Endothelial cell of umbilical vein (primary cell): ENCODE measurements at regions of chr1 and their contacts with region 1.

Region 1: DNA sequence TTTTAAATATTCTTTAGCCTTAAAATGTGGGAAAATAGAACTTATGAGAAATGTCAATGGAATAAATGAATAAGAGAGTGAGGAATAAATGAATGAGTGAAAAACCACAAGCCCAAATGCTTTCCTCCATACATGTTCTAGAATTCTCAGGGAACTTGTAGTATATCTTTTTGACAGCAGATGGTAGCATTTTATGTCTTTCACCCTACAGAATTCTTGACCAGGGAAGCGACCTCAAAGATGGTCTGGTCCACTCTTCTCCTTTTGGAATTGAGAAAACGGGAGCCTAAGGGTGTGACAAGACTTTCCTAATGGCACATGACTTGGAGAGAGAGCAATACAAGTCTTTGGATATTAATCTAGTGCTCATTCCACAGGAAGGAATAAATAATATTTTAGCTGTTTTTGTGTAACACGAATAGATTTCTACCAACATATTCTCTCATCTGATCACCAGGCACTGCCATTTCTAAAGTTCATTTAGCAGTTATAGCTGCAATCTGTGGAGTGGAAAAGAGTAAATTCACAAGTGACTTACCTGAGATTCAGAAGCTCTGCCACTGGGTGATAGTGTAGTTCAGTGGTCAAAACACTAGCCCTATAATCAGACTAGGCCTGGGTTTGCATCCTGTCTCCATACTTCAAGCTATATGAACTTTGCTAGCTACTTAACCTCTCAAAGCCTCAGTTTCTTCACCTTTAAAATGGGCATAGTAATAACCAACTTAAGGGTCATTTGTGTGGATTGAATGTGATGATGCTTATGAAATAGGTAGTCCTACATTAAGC is 15.0 kb upstream of the F5 start:
- DNase-seq: peak; percentile 66
- H3K4me3 ChIP-seq: no peak overlapping the region
- H3K27ac ChIP-seq: no peak overlapping the region
- H3K4me1 ChIP-seq: no peaks in the 10 kb centered on the region
- H3K27me3 ChIP-seq: peaks cover 0 to 6% of the 10 kb centered on the region in 2 experiments
- CTCF ChIP-seq: peak; percentile 20 to 31
- POLR2A ChIP-seq: no peak

Region 2: DNA sequence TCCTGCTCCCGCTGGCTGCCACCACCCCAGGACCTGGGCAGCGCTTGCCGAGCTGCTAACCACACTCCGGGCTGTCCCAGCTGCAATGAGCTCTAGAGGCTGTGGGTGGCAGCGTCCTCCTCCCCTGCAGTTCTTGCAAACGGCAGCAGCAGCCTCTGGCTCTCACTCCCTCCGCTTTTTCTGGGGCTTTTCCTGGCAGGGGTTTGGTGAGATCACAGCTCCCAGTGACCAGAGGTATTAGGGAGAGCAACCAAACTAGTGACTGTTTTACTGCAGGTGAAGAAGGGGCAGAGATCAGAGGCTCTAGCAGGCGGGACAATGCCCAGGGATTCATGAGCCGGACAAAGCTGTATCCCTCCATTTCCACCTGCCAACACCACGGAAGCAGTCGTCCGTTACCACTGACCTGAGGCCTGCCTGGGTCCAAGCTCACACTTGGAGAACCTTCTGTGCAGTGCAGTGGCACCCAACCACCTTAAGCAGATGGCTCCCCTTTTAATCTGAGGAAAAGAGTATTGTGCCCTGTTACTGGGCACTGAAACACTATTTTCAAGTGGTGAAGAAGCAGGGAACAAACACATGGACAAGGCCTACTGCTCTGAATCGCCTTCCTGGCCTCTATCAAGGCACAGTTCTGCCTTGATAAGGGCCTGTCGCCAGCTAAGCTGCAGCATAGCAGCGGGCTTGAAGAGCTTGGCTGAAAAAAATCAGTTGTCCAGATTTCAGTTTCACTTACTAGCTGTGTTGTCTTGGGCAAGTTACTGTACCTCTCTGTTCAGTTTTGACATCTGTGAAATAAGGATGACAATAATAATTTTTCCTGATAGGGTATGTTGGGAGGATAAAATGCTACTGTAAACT is 14.7 kb before region 1 on chr1 and contains the start of gene F5:
- CTCF ChIA-PET with region 1: interaction called, 24 read pairs
- POLR2A ChIA-PET with region 1: no interaction called
- dilution Hi-C with region 1: no loop called
- intact Hi-C with region 1: no loop called
- DNase-seq: peak; percentile 61
- H3K4me3 ChIP-seq: no peak within 1 kb of the TSS
- H3K27ac ChIP-seq: no peak within 1 kb of the TSS
- H3K4me1 ChIP-seq: no peaks in the 10 kb centered on the region
- H3K27me3 ChIP-seq: peaks cover 0 to 4% of the 10 kb centered on the region in 2 experiments
- CTCF ChIP-seq: peak; percentile 43 to 79
- POLR2A ChIP-seq: no peak
- total RNA-seq, gene F5: not detected in 2 replicates

Region 3: GRCh38 chr1:169680377-169681019 is 79.2 kb after region 1 on chr1:
- CTCF ChIA-PET with region 1: interaction called, 8 read pairs
- POLR2A ChIA-PET with region 1: no interaction called
- dilution Hi-C with region 1: no loop called
- intact Hi-C with region 1: loop called (anchors 1 kb)
- DNase-seq: no peak
- H3K4me3 ChIP-seq: no peak overlapping the region
- H3K27ac ChIP-seq: no peak overlapping the region
- H3K4me1 ChIP-seq: peaks cover 12% of the 10 kb centered on the region
- H3K27me3 ChIP-seq: no peaks in the 10 kb centered on the region
- CTCF ChIP-seq: no peak
- POLR2A ChIP-seq: no peak

Region 4: DNA sequence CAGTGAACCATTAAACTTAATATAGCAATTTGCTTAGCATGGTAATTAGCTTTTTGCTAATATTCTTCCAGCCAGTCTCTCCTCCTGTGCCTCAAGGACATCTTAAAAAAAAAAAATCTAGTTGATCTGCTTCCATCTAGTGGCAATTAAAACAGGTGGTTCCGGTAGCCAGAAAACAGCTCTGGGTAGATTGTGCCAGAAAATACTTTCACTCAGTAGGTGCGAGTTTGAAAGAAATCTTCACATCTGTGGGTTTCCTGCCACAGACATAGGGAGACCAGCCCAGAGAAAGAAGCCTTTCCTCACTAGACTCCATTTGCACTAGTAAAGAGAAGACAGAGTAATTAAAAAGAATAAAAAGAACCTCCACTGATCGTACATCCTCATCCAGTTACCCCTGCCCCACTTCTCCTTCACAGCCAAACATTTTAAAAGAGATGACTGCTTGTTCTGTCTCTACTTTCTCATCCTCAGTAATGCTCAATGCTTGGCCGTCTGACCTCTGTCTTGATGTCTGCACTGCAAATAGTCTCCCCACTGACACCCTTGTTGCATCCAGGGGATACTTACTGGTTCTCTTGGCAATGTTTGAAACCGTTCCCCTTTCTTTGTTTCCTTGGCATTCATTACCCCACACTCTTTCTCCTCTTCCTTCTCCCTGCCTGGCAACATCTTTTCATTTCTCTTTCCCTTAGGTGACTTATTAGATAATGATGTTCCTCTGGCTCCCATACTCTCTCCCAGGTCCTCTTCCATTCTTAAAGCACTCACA is 93.2 kb after region 1 on chr1:
- CTCF ChIA-PET with region 1: interaction called, 25 read pairs
- POLR2A ChIA-PET with region 1: no interaction called
- dilution Hi-C with region 1: no loop called
- intact Hi-C with region 1: no loop called
- DNase-seq: peak; percentile 16
- H3K4me3 ChIP-seq: no peak overlapping the region
- H3K27ac ChIP-seq: no peak overlapping the region
- H3K4me1 ChIP-seq: peaks cover 5% of the 10 kb centered on the region
- H3K27me3 ChIP-seq: no peaks in the 10 kb centered on the region
- CTCF ChIP-seq: no peak
- POLR2A ChIP-seq: no peak